Mammary epithelial cell (primary cell): ENCODE measurements at regions of chr12 and their contacts with region 1.

Region 1: GRCh38 chr12:39526974-39527373 is 84.1 kb upstream of the KIF21A start:
- DNase-seq: no peak
- H3K4me3 ChIP-seq: no peak overlapping the region
- H3K27ac ChIP-seq: no peak overlapping the region
- H3K4me1 ChIP-seq: no peaks in the 10 kb centered on the region
- H3K27me3 ChIP-seq: no peaks in the 10 kb centered on the region
- CTCF ChIP-seq: no peak

Region 2: GRCh38 chr12:39464976-39465695 is 61.8 kb before region 1 on chr12:
- CTCF ChIA-PET with region 1: no interaction called
- dilution Hi-C with region 1: loop called (anchors 5 kb)
- in situ Hi-C with region 1: no loop called
- intact Hi-C with region 1: no loop called
- DNase-seq: no peak
- H3K4me3 ChIP-seq: no peak overlapping the region
- H3K27ac ChIP-seq: no peak overlapping the region
- H3K4me1 ChIP-seq: no peaks in the 10 kb centered on the region
- H3K27me3 ChIP-seq: no peaks in the 10 kb centered on the region
- CTCF ChIP-seq: no peak

Region 3: DNA sequence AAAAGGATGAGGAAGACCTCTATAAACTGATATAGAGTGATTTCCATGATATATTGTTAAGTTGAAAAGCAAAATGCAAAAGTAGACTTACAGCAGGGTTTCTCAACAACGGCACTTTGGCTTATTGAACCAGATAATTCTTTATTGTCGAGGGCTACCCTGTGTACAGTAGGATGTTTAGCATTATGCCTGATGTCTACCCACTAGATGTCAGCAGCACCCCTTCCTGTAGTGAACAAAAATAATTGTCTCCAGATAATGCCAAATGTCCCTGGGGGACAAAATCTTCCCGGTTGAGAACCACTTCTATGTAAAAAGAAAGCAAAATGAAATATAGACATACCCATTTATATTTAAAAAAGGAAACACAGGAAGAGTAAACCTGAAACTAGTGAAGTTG is 60.3 kb after region 1 on chr12:
- CTCF ChIA-PET with region 1: no interaction called
- dilution Hi-C with region 1: no loop called
- in situ Hi-C with region 1: no loop called
- intact Hi-C with region 1: no loop called
- DNase-seq: peak; percentile 20
- H3K4me3 ChIP-seq: no peak overlapping the region
- H3K27ac ChIP-seq: no peak overlapping the region
- H3K4me1 ChIP-seq: no peaks in the 10 kb centered on the region
- H3K27me3 ChIP-seq: no peaks in the 10 kb centered on the region
- CTCF ChIP-seq: peak; percentile 48 to 59

Region 4: GRCh38 chr12:39628836-39629235 is 101.9 kb after region 1 on chr12:
- CTCF ChIA-PET with region 1: no interaction called
- dilution Hi-C with region 1: no loop called
- in situ Hi-C with region 1: no loop called
- intact Hi-C with region 1: no loop called
- DNase-seq: no peak
- H3K4me3 ChIP-seq: no peak overlapping the region
- H3K27ac ChIP-seq: no peak overlapping the region
- H3K4me1 ChIP-seq: peaks cover 2% of the 10 kb centered on the region
- H3K27me3 ChIP-seq: no peaks in the 10 kb centered on the region
- CTCF ChIP-seq: no peak